Breast epithelium (tissue), 4 donors: ENCODE measurements at regions of chr19 and their contacts with region 1.

Region 1: GRCh38 chr19:11137542-11138384 is 17.8 kb downstream of the SPC24 start:
- DNase-seq: peak; percentile 74 to 81
- H3K4me3 ChIP-seq: peak overlapping the region; percentile 22 to 57 (median 32)
- H3K27ac ChIP-seq: peak overlapping the region; percentile 87 to 93
- H3K4me1 ChIP-seq: peaks cover 19 to 32% of the 10 kb centered on the region in 2 donors
- H3K27me3 ChIP-seq: no peaks in the 10 kb centered on the region
- CTCF ChIP-seq: peak; percentile 81 to 90 (median 82)
- POLR2A ChIP-seq: no peak

Region 2: GRCh38 chr19:11203194-11204075 is 65.7 kb after region 1 on chr19:
- intact Hi-C with region 1: loop called (anchors 1 kb)
- DNase-seq: peak in 1 of 2 donors; percentile 81
- H3K4me3 ChIP-seq: no peak overlapping the region
- H3K27ac ChIP-seq: peak overlapping the region; percentile 88 to 90
- H3K4me1 ChIP-seq: peaks cover 0 to 3% of the 10 kb centered on the region in 2 donors
- H3K27me3 ChIP-seq: no peaks in the 10 kb centered on the region
- CTCF ChIP-seq: peak in 2 of 3 donors; percentile 58 to 77
- POLR2A ChIP-seq: no peak

Region 3: DNA sequence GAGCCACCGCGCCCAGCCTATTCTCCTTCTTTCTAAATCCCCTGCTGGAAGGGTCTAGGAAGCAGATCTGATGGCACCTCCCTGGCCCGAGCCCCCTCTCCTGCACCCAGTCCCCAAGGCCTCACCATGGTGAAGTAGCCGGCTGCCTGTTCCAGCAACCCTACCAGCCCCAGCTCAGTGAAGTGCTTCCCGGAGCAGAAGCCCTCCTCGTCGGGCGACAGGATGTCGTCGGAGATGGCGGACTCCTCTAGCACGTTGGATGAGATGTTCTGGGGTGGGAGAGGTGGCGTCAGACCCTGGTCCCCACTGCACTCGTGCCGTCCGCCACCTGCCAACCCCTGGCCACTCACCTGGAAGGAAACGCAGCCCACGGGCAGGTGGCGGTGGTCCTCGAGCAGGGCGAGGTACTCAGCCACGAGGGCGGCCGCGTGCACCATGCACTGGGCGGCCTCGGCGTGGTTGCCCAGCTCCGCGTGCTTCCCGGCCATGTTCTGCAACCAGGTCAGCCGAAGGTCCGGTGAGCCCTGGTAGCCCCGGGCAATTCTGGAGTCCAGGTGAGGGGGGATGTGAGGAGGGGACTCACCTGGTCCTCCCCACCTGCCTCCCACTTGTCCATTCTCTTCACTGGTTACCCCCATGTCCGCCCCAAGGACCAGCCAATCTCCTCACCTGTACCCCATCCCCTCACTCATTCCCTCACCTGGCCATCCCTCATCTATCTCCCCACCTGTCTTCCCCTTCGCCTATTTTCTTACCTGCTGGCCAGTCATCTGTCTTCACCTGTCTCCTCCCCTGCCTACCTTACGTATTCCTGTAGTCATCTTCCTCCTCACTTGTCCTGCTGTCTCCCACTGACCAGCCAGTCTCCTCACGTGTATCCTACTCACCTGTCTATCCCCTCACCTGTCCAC is 71.1 kb after region 1 on chr19:
- intact Hi-C with region 1: loop called (anchors 1 kb)
- DNase-seq: no peak
- H3K4me3 ChIP-seq: no peak overlapping the region
- H3K27ac ChIP-seq: peak overlapping the region in 1 of 2 donors; percentile 3
- H3K4me1 ChIP-seq: no peaks in the 10 kb centered on the region
- H3K27me3 ChIP-seq: no peaks in the 10 kb centered on the region
- CTCF ChIP-seq: no peak
- POLR2A ChIP-seq: no peak